Colonic mucosa (tissue), 4 donors: ENCODE measurements at regions of chr12 and their contacts with region 1.

Region 1: GRCh38 chr12:65891987-65892481 is 67.8 kb downstream of the HMGA2 start:
- DNase-seq: peak; percentile 59
- H3K4me3 ChIP-seq: no peak overlapping the region
- H3K27ac ChIP-seq: peak overlapping the region; percentile 18
- H3K4me1 ChIP-seq: peaks cover 5% of the 10 kb centered on the region
- H3K27me3 ChIP-seq: no peaks in the 10 kb centered on the region
- CTCF ChIP-seq: no peak

Region 2: DNA sequence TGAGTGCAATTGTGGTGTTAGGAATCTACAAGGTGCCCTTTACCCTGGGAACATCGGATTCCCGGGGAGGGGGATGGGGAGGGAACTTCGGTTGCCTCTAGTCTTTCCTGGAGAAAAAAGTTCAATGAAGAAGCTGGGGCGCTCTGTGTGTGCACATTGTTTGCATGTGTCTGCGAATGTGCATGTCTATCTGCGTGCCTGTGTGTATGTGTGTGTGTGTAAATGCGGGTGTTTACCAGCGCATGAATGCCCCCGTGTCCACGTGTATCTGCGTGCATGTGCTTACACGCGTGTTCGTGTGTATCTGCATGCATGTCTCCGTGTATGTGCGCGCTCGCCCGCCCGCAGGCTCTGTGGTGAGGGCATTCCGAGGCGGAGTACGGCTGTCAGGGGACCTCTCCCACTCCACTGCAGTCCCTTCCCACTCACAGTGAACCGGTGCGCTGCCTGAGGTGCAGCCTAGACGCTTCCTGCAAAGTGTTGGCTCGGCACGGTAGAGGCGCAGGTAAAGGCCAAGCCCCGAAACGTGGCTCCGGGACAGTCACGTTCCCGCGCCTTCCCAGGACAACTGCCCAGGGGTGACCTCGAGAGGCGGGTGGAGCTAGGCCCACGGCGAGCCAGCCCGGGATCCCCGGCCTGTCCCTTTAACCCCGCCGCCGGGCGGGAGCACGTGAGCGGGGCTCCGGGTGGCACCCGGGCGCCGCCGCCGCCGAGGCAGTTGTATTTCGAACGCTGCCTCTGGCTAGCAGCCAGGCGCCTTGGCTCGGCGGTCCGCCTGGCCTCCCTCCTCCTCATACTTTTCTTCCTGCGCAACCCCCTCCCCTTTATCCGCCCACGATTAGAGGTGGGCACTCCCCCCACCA is 68.3 kb before region 1 on chr12:
- intact Hi-C with region 1: loop called (anchors 10 kb)
- DNase-seq: peak; percentile 77
- H3K4me3 ChIP-seq: peak overlapping the region; percentile 70
- H3K27ac ChIP-seq: peak overlapping the region; percentile 56
- H3K4me1 ChIP-seq: no peaks in the 10 kb centered on the region
- H3K27me3 ChIP-seq: peaks cover 4% of the 10 kb centered on the region
- CTCF ChIP-seq: no peak